ENCODE measurements at regions of chr5 and their contacts with region 1.

Region 1: GRCh38 chr5:73448463-73449136 is at the start of gene FOXD1:
- DNase-seq: peak; percentile 49
- H3K4me3 Mint-ChIP-seq: peak within 1 kb of the TSS; percentile 77
- H3K27ac Mint-ChIP-seq: no peak within 1 kb of the TSS
- H3K4me1 Mint-ChIP-seq: peaks cover 2% of the 10 kb centered on the region
- H3K27me3 Mint-ChIP-seq: peaks cover 72% of the 10 kb centered on the region
- total RNA-seq, gene FOXD1: 0.12 TPM

Region 2: GRCh38 chr5:72955768-72956323 is 492.8 kb before region 1 on chr5 and contains the start of gene FCHO2:
- CTCF ChIA-PET with region 1: no interaction called
- intact Hi-C with region 1: loop called (anchors 2 kb)
- DNase-seq: peak; percentile 95
- H3K4me3 Mint-ChIP-seq: peak within 1 kb of the TSS; percentile 91
- H3K27ac Mint-ChIP-seq: peak within 1 kb of the TSS; percentile 63
- H3K4me1 Mint-ChIP-seq: peaks cover 10% of the 10 kb centered on the region
- H3K27me3 Mint-ChIP-seq: peaks cover 47% of the 10 kb centered on the region
- total RNA-seq, gene FCHO2: 0.54 to 0.93 TPM

Region 3: DNA sequence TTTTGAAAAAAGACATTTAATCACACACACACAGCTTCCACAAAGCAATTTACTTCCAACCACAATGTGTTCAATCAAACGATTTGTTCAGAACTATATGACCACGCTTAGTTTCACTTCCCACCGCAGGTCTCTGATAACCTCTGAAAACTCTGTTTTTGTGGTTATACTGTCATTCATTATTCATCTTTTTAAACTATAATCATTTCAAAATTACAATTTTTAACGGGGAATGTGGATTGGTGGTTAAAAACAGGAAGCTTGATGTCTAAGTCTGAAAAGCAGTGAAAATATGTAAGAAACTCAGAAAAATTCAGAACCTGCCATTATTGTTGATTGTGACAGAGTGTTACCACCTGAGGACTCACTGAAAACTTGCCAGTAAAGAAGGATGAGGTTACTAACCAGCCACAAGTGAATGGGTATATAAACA is 288.3 kb before region 1 on chr5:
- CTCF ChIA-PET with region 1: interaction called, 3 read pairs
- intact Hi-C with region 1: loop called (anchors 2 kb)
- DNase-seq: peak; percentile 95
- H3K4me3 Mint-ChIP-seq: no peak overlapping the region
- H3K27ac Mint-ChIP-seq: no peak overlapping the region
- H3K4me1 Mint-ChIP-seq: peaks cover 36% of the 10 kb centered on the region
- H3K27me3 Mint-ChIP-seq: peaks cover 78% of the 10 kb centered on the region

Region 4: GRCh38 chr5:73298772-73299630 is 149.6 kb before region 1 on chr5:
- CTCF ChIA-PET with region 1: interaction called, 4 read pairs
- intact Hi-C with region 1: loop called (anchors 1 kb)
- DNase-seq: no peak
- H3K4me3 Mint-ChIP-seq: no peak overlapping the region
- H3K27ac Mint-ChIP-seq: no peak overlapping the region
- H3K4me1 Mint-ChIP-seq: peaks cover 22% of the 10 kb centered on the region
- H3K27me3 Mint-ChIP-seq: peaks cover 87% of the 10 kb centered on the region

Region 5: DNA sequence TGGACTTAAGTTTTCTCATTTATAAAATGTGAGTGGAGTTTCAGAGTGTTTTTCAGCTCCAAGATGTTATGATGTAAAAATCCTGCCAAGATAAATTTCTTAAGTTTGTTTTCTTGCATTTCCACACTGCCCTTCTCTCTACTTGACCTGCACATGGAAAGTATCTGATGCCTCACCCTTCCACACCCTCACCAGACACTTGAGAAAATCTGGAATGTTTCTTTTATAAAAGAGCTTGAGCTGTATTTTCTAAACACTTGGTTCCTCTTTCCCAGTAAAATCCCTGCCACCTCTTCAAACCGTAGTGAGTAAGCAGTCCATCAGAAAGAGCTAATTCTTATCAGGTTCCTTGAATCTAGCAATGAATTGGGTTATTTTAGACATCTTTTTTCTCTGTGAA is 42.9 kb before region 1 on chr5:
- CTCF ChIA-PET with region 1: no interaction called
- intact Hi-C with region 1: no loop called
- DNase-seq: no peak
- H3K4me3 Mint-ChIP-seq: no peak overlapping the region
- H3K27ac Mint-ChIP-seq: no peak overlapping the region
- H3K4me1 Mint-ChIP-seq: no peaks in the 10 kb centered on the region
- H3K27me3 Mint-ChIP-seq: peaks cover 13% of the 10 kb centered on the region

Region 6: DNA sequence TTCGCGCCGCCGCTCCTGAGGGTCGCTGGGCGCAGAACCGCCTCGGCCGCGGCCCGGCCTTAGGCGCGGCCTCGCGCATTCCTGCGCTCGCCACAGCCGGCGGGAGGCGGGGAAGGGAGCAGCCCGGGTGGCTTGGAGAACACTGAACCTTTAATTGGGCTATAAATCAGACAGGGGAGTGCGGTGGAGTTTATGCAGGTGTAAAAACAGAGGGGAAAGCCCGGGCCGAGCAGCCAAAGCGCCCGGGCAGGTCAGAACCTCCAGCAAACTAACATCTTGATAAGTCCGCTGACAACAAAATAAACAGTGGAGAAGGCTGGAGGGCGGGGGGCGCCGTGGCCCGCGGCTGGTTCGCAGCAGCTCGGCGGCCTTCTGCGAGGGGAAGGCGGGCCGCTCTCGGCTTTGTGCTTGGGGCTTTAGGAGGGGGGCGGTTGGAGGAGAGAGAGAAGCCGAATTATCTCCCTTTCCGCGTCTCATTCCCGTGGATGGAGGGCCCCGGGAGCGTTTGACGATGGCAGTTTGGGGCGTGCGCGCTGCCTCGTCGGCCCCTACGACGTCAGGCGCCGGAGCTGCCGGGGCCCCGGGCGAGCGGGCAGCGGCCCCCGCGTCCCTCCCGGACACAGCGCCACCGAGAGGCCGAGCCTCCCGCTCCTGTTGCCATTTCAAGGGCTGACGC is 11.4 kb before region 1 on chr5:
- CTCF ChIA-PET with region 1: interaction called, 6 read pairs
- intact Hi-C with region 1: loop called (anchors 1 kb)
- DNase-seq: no peak
- H3K4me3 Mint-ChIP-seq: peak overlapping the region; percentile 56
- H3K27ac Mint-ChIP-seq: no peak overlapping the region
- H3K4me1 Mint-ChIP-seq: peaks cover 15% of the 10 kb centered on the region
- H3K27me3 Mint-ChIP-seq: peaks cover 78% of the 10 kb centered on the region

Measured in activated naive CD4-positive, alpha-beta T cell treated with anti-CD3 and anti-CD28 coated beads for 36 hours (primary cell).